ENCODE measurements at regions of chr2 and their contacts with region 1.

Region 1: GRCh38 chr2:102126651-102127050 is 15.9 kb upstream of the IL1R1 start:
- DNase-seq: no peak
- H3K4me3 ChIP-seq: no peak overlapping the region
- CTCF ChIP-seq: no peak

Region 2: DNA sequence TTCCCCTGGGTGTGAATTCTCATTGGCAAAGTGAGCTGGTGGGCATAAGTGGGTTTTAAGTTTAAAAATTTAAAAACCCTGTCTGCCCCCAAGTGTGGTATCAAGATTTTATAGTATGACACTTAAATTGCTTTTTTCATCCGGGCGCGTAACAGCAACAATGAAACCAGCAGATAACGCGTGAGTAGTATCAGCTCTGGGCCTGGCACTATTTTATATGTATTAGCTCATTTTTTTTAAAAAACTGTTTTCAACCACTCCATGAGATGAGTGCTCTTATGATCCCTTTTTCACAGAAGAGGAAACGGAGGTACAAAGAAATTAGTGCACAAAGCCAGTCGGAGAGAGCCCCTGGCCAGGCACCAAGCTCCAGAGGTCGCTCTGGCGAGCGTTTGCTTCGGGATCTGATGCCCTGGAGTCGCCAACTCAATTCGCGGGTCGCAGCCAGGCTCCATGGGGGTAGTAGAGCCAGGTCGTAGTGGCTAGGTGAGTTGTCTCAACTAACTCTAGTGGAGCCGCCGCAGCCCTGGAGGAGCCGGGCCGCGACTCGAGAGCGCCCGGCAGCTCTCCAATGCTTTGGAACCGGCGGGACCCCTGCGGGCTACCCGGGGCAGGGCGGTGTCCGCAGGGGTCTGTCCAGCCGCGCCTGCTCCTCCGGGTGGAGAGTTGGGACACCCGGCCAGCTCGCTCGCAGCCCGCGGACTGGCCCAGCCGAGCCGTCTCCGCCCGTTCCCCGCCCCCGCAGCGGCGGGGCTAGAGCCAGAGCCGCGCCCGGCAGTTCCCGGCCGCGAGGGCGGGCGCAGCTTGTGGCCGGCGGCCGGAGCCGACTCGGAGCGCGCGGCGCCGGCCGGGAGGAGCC is 15.5 kb after region 1 on chr2 and contains the start of gene IL1R1:
- CTCF ChIA-PET with region 1: interaction called, 10 read pairs
- POLR2A ChIA-PET with region 1: interaction called, 5 read pairs
- DNase-seq: no peak
- H3K4me3 ChIP-seq: peak within 1 kb of the TSS; percentile 69
- CTCF ChIP-seq: no peak